GM10248 (cell line): ENCODE measurements at regions of chr5 and their contacts with region 1.

Region 1: GRCh38 chr5:119458911-119459632 is 6.8 kb downstream of the HSD17B4 start:
- DNase-seq: no peak
- CTCF ChIP-seq: no peak

Region 2: GRCh38 chr5:119268387-119269060 is 190.5 kb before region 1 on chr5:
- CTCF ChIA-PET with region 1: no interaction called
- POLR2A ChIA-PET with region 1: no interaction called
- DNase-seq: peak; percentile 97
- CTCF ChIP-seq: no peak

Region 3: DNA sequence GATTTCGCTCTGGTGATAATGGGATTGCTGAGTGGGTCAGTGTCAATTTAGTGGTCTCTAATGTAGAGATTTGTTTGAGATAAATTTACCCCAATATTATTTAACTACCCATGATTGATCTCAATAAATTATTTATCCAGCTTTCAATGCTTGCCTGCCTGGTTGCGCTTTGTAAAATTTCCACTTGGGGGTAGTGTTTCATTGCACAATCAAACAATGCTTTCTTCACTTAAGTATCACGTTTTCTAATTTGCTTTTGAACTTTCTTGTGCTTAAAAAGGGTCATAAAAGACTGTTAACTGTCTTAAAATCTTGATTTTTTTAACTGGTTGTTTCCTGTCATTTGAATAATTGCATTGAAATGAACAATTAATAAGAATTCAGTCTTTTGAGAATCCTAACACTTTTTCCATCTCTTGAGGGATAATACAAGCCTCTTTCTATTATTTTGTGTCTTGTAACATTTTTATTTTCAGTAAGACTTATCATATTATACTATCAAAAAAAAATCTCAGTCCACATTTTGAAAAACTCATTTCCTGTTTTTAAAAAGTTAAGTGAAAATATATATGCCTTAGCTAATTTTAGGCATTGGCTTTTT is 11.9 kb after region 1 on chr5:
- CTCF ChIA-PET with region 1: interaction called, 21 read pairs
- POLR2A ChIA-PET with region 1: no interaction called
- DNase-seq: peak; percentile 13
- CTCF ChIP-seq: peak; percentile 58

Region 4: DNA sequence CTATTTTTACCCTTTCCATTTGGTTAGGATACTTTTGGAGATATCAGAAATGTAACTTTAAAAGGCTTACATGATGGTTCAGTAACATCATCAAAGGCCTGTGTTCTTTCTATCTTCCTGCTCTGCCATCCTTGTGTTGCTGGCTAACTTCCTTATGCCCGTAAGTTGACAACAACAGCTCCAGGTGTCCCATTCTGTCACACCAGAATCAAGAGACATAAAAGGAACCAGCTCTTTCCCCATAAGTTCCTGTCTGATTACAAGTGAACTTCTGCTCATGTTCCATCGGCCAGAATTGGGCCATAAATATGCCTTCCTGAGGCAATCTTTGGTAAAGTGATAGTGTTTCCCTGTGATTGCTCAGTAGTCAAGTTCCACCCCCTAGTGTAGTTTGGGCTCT is 262.7 kb after region 1 on chr5:
- CTCF ChIA-PET with region 1: no interaction called
- POLR2A ChIA-PET with region 1: no interaction called
- DNase-seq: no peak
- CTCF ChIP-seq: no peak